CD4-positive, alpha-beta T cell (primary cell): ENCODE measurements at regions of chr5 and their contacts with region 1.

Region 1: DNA sequence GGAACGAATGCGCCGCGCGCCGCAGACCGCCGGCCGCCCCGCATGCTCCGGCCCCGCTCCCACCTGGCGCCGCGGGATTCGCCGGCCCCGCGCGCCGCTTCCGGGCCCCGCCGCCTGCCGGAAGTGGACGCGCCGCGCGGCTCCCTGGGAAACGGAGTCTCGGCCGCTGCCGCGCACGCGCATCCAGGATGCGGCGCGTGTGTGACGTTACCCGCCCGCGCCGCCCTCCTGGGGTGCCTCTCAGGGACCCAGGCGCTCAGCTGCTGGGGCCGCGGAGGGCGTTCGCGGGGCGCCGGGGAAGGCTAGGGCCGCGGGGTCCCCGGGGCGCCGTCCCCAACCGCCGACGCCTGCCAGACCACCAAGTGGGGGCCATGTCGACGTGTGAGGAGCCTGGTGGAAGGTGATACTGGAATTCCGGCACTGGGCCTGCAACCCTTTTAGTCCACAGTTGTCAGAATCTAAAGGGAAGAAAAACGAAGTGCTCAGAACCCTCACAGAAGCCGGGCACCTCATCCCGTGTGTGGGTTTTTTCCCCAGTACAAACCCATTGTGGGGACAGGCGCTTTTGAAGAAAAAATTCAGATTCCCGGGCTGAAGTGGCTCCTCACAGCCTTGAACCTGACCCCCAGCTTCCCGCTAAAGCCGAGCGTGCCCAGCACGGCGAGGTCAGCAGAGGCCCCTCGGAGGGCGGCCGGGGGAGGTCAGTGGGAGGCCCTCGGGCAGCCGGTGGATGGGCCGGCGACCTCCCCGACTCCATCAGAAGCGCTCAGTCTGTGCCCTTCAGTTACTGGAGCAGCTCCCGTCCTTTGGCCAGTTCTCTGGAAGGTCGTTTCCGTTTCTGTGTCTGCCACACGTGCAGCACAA is at the start of gene CLPTM1L:
- DNase-seq: peak; percentile 75 to 97 (median 86)
- ATAC-seq: peak; percentile 96
- H3K4me3 ChIP-seq: peak within 1 kb of the TSS; percentile 86
- H3K4me3 Mint-ChIP-seq: peak within 1 kb of the TSS; percentile 96
- H3K27ac ChIP-seq: peak within 1 kb of the TSS; percentile 57 to 60
- H3K27ac Mint-ChIP-seq: peak within 1 kb of the TSS; percentile 91
- H3K4me1 ChIP-seq: peaks cover 38% of the 10 kb centered on the region
- H3K4me1 Mint-ChIP-seq: peaks cover 33% of the 10 kb centered on the region
- H3K27me3 ChIP-seq: no peaks in the 10 kb centered on the region
- H3K27me3 Mint-ChIP-seq: no peaks in the 10 kb centered on the region
- CTCF ChIP-seq: no peak
- total RNA-seq, gene CLPTM1L: 47.2 to 47.4 TPM

Region 2: DNA sequence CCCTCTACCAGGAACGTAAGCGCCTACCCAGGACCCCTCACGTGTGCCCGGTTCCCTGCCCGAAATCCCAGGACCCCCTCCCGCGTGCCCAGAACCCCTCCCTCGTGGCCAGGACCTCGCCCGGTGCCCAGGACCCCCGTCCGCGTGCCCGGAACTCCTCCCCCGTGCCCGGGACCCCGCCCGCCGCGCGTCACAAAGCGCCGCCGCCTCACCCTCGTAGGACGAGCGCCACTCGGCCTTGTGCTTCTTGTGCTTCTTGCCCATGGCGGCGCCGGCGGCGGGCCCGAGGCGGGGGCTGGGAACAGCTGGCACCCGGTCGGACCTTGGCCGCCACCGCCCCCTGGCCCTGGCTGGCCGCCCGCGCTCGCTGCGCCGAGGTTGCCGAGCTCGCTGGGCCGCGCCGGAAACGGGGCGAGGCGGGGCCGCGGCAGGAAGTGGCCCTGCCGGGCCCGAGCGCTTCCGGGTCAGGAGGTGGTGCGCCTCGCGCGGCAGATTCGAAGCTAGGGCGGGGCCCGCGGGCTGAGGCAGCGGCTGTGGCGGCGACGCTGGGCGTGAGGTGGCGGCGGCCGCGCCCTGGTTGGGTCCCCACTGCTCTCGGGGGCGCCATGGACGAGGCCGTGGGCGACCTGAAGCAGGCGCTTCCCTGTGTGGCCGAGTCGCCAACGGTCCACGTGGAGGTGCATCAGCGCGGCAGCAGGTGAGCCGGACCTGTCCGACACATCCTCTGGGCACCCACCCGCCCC is 452.6 kb before region 1 on chr5 and contains the starts of genes BRD9 and TRIP13:
- CTCF ChIA-PET with region 1: no interaction called
- POLR2A ChIA-PET with region 1: interaction called, 3 read pairs
- intact Hi-C with region 1: loop called in 1 of 2 experiments (anchors 5 kb)
- DNase-seq: peak; percentile 69 to 93 (median 80)
- ATAC-seq: peak; percentile 95
- H3K4me3 ChIP-seq: peak within 1 kb of the TSS; percentile 95
- H3K4me3 Mint-ChIP-seq: peak within 1 kb of the TSS; percentile 92
- H3K27ac ChIP-seq: peak within 1 kb of the TSS; percentile 48 to 67
- H3K27ac Mint-ChIP-seq: peak within 1 kb of the TSS; percentile 90
- H3K4me1 ChIP-seq: peaks cover 30% of the 10 kb centered on the region
- H3K4me1 Mint-ChIP-seq: peaks cover 25% of the 10 kb centered on the region
- H3K27me3 ChIP-seq: no peaks in the 10 kb centered on the region
- H3K27me3 Mint-ChIP-seq: no peaks in the 10 kb centered on the region
- CTCF ChIP-seq: no peak
- total RNA-seq, gene BRD9: 109 TPM
- total RNA-seq, gene TRIP13: 0.47 to 0.66 TPM

Region 3: GRCh38 chr5:1217596-1218206 is 127.5 kb before region 1 on chr5:
- CTCF ChIA-PET with region 1: no interaction called
- POLR2A ChIA-PET with region 1: no interaction called
- intact Hi-C with region 1: no loop called
- DNase-seq: peak in 1 of 14 experiments; percentile 13
- ATAC-seq: peak; percentile 34
- H3K4me3 ChIP-seq: no peak overlapping the region
- H3K4me3 Mint-ChIP-seq: no peak overlapping the region
- H3K27ac ChIP-seq: no peak overlapping the region
- H3K27ac Mint-ChIP-seq: no peak overlapping the region
- H3K4me1 ChIP-seq: no peaks in the 10 kb centered on the region
- H3K4me1 Mint-ChIP-seq: no peaks in the 10 kb centered on the region
- H3K27me3 ChIP-seq: no peaks in the 10 kb centered on the region
- H3K27me3 Mint-ChIP-seq: no peaks in the 10 kb centered on the region
- CTCF ChIP-seq: no peak

Region 4: DNA sequence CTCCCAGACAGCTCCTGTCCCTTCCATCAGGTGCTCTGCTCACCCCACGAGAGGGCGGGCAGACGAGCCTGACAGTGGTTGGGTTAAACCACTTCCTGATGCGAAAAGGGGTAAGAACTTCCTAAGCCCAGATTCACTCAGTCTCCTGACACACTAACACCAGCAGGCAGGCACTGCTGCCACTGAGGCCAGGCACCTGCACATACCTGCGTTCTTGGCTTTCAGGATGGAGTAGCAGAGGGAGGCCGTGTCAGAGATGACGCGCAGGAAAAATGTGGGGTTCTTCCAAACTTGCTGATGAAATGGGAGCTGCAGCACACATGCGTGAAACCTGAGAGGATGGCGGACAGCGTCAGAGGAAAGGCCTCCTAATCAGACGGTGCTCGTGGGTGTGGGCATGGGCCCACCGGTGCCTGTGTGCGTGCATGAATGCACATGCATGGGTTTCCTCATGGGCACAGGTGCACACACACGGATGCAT is 90.1 kb before region 1 on chr5:
- CTCF ChIA-PET with region 1: no interaction called
- POLR2A ChIA-PET with region 1: interaction called, 10 read pairs
- intact Hi-C with region 1: loop called in 1 of 2 experiments (anchors 1 kb)
- DNase-seq: peak; percentile 19 to 77 (median 54)
- ATAC-seq: peak; percentile 90
- H3K4me3 ChIP-seq: peak overlapping the region; percentile 37
- H3K4me3 Mint-ChIP-seq: peak overlapping the region; percentile 86
- H3K27ac ChIP-seq: no peak overlapping the region
- H3K27ac Mint-ChIP-seq: peak overlapping the region; percentile 70
- H3K4me1 ChIP-seq: peaks cover 23% of the 10 kb centered on the region
- H3K4me1 Mint-ChIP-seq: peaks cover 21% of the 10 kb centered on the region
- H3K27me3 ChIP-seq: no peaks in the 10 kb centered on the region
- H3K27me3 Mint-ChIP-seq: no peaks in the 10 kb centered on the region
- CTCF ChIP-seq: peak; percentile 30

Region 5: DNA sequence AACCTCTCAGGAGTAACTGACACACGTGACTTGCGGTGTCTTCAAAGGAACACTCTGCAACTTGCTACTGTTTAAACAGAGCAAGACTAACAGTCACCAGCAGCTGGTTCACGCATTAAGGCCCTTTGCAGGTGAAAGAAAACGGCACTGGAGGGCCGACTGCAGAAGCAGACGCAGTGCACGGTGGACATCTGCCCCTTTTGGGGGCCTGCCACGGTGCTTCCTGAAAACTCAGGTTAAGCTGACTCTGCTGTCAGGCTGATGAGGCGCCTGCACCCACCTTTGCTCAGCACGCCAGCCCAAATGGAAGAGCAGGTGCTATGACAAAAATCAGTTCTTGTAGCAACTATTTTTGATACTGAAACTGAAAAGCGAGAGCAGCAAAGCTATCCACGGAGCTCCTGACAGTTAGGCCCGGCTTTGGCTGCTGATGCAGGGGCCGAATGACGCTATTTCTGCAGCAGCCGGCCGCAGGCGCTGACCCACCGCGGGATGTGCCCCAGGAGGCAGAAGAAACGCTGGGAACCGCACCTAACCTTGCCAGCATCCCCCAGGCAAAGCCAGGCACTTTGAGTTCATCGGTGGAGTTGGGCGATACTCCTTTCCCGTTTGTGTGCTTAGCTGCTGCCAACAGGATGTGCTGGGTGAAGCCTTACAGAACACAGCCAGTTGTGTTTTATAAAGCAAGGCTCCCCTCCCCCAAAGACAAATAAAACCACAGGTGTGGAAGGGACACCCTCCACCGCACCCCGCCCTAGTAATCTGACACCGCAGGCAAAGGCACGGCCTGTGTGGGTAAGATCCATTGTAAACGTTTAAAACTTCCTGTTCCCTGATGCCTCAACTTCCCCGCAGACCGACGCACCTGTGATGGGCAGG is 29.3 kb before region 1 on chr5:
- CTCF ChIA-PET with region 1: no interaction called
- POLR2A ChIA-PET with region 1: interaction called, 27 read pairs
- intact Hi-C with region 1: loop called (anchors 1 to 2 kb)
- DNase-seq: peak; percentile 34 to 89 (median 58)
- ATAC-seq: peak; percentile 66
- H3K4me3 ChIP-seq: peak overlapping the region; percentile 58
- H3K4me3 Mint-ChIP-seq: peak overlapping the region; percentile 81
- H3K27ac ChIP-seq: peak overlapping the region; percentile 57 to 67
- H3K27ac Mint-ChIP-seq: peak overlapping the region; percentile 95
- H3K4me1 ChIP-seq: peaks cover 62% of the 10 kb centered on the region
- H3K4me1 Mint-ChIP-seq: peaks cover 66% of the 10 kb centered on the region
- H3K27me3 ChIP-seq: no peaks in the 10 kb centered on the region
- H3K27me3 Mint-ChIP-seq: no peaks in the 10 kb centered on the region
- CTCF ChIP-seq: no peak

Region 6: DNA sequence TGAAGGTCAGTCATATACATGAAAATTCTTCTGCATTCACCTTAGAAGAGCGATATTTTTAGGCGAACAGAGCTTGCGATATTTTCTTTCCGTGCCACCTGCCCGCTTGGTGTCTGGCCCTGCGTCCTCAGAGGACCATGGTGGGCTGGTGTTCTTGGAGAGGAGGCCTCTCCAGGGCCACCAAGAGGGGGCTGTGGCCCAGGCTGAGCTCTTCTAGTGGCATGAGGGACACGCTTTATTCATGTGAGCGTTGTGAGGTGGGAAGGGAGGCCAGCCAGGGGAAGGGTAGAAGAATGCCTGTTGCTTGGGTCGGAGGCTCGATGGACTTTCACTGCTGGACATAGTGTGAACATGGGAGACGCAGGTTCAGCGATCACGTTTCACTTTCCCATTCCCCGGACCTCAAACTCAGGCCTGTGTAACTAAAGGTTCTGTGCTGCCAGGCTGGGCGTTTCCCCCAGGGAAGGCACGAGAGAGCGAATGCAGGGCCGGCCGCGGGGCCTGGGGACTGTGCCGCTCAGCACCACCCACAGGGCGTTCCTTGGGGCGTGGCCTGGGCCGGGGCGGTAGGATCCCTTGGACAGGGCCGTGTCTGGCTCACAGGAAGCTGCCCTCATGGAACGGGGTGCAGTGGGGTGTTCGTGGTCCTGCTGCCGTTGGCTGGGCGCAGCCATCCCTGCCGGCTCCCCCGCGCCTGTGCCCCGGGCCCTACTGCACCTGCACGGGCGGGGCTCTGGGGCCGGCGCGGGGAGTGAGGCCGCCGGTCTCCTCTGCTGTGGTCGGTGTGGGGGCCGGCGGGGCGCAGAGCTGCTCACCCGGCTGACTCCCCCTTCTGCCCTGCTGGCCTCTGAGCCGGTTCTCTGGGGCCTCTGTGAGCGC is 40.4 kb after region 1 on chr5:
- CTCF ChIA-PET with region 1: interaction called, 12 read pairs
- POLR2A ChIA-PET with region 1: interaction called, 38 read pairs
- intact Hi-C with region 1: loop called (anchors 1 kb)
- DNase-seq: peak; percentile 73 to 96 (median 86)
- ATAC-seq: peak; percentile 75
- H3K4me3 ChIP-seq: peak overlapping the region; percentile 70
- H3K4me3 Mint-ChIP-seq: peak overlapping the region; percentile 99
- H3K27ac ChIP-seq: peak overlapping the region; percentile 93
- H3K27ac Mint-ChIP-seq: peak overlapping the region; percentile 99
- H3K4me1 ChIP-seq: peaks cover 30% of the 10 kb centered on the region
- H3K4me1 Mint-ChIP-seq: peaks cover 34% of the 10 kb centered on the region
- H3K27me3 ChIP-seq: no peaks in the 10 kb centered on the region
- H3K27me3 Mint-ChIP-seq: no peaks in the 10 kb centered on the region
- CTCF ChIP-seq: no peak

Region 7: DNA sequence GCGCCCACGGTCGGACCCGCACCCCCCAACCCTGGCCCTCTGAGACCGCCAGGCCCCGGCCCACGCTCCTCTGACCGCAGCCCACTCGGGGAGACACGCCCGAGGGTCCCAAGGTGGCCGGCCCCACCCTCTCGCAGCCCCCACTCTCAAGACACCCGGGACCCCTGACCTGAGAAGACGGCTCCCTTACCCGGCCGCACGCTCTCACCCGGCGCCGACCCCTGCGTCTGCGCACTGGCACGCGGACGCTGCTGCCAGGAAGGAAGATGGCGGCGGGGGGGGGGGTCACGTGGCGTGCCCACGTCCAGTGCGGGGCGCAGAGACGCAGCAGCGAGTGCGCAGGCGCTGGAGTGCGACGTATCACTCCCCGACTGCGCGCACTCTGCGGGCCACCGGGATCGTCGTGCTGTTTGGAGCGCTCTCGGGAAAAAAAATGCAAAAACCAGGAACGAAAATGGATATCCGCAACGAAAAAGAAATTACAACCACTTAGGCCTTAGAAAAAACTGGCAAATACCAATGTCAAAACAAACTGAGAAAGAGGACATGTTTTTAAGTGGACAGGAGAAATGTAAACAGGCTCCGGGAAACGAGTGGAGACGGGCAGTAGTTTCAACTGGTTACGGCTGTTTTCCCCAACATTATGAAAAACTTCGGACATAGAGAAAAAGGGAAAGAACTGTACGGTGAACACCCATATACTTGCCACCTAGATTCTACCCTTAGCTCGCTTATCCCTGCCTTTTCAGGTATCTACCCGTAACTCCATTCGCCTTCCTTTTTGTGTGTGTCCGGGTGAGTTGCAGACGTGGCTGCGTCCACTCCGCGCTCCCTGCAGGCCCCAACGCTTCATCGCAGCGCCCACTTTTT is 454.6 kb after region 1 on chr5 and contains the start of gene MRPL36:
- CTCF ChIA-PET with region 1: no interaction called
- POLR2A ChIA-PET with region 1: interaction called, 3 read pairs
- intact Hi-C with region 1: loop called in 1 of 2 experiments (anchors 10 kb)
- DNase-seq: peak; percentile 89 to 97 (median 92)
- ATAC-seq: peak; percentile 73
- H3K4me3 ChIP-seq: peak within 1 kb of the TSS; percentile 82
- H3K4me3 Mint-ChIP-seq: peak within 1 kb of the TSS; percentile 100
- H3K27ac ChIP-seq: peak within 1 kb of the TSS; percentile 74 to 89
- H3K27ac Mint-ChIP-seq: peak within 1 kb of the TSS; percentile 99
- H3K4me1 ChIP-seq: peaks cover 51% of the 10 kb centered on the region
- H3K4me1 Mint-ChIP-seq: peaks cover 65% of the 10 kb centered on the region
- H3K27me3 ChIP-seq: no peaks in the 10 kb centered on the region
- H3K27me3 Mint-ChIP-seq: no peaks in the 10 kb centered on the region
- CTCF ChIP-seq: no peak
- total RNA-seq, gene MRPL36: 14.3 to 18.2 TPM